Calu3 (cell line): ENCODE measurements at regions of chr9 and their contacts with region 1.

Region 1: GRCh38 chr9:112065806-112066606 is 109.1 kb downstream of the SUSD1 start:
- DNase-seq: peak; percentile 79
- H3K4me3 Mint-ChIP-seq: peak overlapping the region; percentile 45
- H3K27ac Mint-ChIP-seq: peak overlapping the region; percentile 97
- H3K4me1 Mint-ChIP-seq: peaks cover 52% of the 10 kb centered on the region
- H3K27me3 Mint-ChIP-seq: no peaks in the 10 kb centered on the region
- CTCF ChIP-seq: no peak

Region 2: DNA sequence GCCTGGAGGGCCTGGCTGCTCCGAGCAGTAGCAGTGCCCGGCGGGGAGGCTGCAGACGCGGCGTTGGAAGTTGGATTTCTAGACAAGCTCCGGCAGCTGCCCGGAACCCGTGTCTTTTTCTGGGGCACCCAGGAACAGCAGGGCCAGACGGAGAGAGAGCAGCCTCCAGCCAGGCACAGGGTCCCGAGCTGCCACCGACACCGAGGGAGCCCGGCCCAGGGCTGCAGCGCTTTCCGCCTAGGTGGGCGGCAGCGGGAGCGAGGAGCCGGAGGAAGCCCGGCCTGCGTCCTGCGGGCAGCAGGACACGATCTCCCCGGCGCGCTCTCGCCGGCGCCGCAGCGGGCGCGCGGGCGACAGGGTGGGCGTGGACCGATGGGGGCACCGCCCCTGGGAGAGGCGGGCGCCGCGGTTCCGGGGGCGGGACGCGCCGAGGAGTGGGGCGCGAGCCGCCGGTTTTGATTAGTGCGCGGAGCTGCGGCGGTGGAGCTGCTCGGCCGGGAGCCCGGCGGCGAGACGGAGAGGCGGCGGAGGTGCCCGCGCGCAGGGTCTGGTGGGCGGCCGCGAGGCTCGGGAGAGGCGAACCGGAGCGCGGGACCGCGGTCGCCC is 169.6 kb before region 1 on chr9 and contains the start of gene UGCG:
- CTCF ChIA-PET with region 1: no interaction called
- intact Hi-C with region 1: loop called (anchors 5 kb)
- DNase-seq: peak; percentile 90
- H3K4me3 Mint-ChIP-seq: no peak within 1 kb of the TSS
- H3K27ac Mint-ChIP-seq: peak within 1 kb of the TSS; percentile 96
- H3K4me1 Mint-ChIP-seq: no peaks in the 10 kb centered on the region
- H3K27me3 Mint-ChIP-seq: no peaks in the 10 kb centered on the region
- CTCF ChIP-seq: no peak
- total RNA-seq, gene UGCG: 75.5 and 84.8 TPM in 2 replicates

Region 3: DNA sequence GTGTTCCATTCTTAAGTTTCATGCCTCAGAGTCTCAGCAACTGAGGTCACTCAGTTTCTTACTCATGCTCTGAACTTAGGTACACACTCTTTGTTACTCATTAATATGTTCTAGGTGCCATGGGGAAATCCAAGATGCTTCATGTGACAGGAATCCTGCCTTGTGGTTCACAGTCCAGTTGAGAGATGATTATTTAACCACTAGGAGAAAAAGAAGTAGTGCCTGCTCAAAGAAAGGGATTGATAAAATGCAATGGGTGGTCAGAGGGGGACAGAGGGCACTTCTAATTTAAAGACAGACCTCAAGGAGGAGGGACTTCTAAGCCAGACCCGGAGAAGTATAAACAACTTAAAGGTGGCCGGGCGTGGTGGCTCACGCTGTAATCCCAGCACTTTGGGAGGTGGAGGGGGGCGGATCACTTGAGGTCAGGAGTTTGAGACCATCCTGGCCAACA is 100.4 kb before region 1 on chr9:
- CTCF ChIA-PET with region 1: interaction called, 5 read pairs
- intact Hi-C with region 1: loop called (anchors 2 kb)
- DNase-seq: peak; percentile 54
- H3K4me3 Mint-ChIP-seq: peak overlapping the region; percentile 31
- H3K27ac Mint-ChIP-seq: peak overlapping the region; percentile 95
- H3K4me1 Mint-ChIP-seq: peaks cover 44% of the 10 kb centered on the region
- H3K27me3 Mint-ChIP-seq: no peaks in the 10 kb centered on the region
- CTCF ChIP-seq: no peak

Region 4: DNA sequence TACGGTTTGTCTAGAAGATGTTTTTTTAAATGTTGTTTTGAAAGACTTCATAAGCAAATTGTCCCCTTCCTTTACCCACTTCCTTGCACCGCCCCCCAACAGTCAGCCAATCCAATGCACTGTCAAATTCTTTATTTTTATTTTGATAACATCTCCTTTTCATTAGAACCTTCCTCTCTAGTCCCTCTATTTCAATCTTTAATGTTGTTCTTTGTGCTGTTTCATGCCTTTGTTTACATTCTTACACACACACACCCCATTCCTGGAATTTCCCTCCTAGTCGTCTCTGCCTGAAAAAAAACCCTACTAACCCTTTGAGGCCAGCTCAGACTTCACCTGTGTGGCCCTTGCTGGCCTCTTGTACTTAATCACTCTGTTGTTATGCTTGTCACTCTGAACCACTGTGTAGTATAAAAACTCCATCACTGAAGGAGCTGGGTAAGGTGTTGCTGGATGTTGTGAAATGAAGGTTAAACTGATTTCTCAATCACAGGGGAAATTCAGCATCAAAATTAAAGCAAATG is 36.0 kb before region 1 on chr9:
- CTCF ChIA-PET with region 1: no interaction called
- intact Hi-C with region 1: loop called (anchors 5 kb)
- DNase-seq: peak; percentile 71
- H3K4me3 Mint-ChIP-seq: peak overlapping the region; percentile 12
- H3K27ac Mint-ChIP-seq: peak overlapping the region; percentile 86
- H3K4me1 Mint-ChIP-seq: peaks cover 55% of the 10 kb centered on the region
- H3K27me3 Mint-ChIP-seq: no peaks in the 10 kb centered on the region
- CTCF ChIP-seq: no peak

Region 5: DNA sequence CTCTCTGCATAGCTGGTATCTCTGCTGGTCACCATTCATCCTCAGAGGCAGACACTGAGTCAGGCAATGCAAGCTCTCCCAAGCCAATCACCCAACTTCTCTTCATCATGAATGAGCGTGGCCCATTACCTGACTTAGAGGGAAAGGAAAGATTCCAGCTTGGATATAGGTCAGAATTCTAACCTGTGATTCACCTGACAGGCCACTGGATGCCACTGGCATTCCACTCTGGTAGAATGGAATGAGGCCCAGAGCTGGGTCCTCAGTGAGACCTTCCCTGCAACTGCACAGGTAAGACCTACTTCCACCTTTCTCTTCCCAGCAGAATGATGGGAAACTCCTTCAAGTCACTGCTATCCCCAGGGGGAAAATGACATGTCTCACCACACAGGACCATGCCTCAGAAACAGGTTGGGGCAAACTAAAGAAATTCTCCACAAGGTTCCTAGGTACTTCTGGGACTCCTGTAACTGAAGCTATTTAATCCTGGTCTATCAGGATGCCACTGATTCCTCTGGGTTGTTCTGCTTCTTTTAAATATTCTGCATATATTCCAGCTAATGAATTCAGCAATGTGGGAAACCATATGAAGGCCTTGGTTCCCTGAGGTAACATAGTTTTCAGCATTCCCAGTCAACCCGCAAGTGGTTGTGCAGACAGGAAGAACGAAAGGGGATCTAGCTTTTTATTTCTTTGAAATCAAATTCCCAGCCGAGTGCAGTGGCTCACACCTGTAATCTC is 47.1 kb after region 1 on chr9:
- CTCF ChIA-PET with region 1: no interaction called
- intact Hi-C with region 1: no loop called
- DNase-seq: peak; percentile 43
- H3K4me3 Mint-ChIP-seq: peak overlapping the region; percentile 9
- H3K27ac Mint-ChIP-seq: peak overlapping the region; percentile 86
- H3K4me1 Mint-ChIP-seq: peaks cover 49% of the 10 kb centered on the region
- H3K27me3 Mint-ChIP-seq: no peaks in the 10 kb centered on the region
- CTCF ChIP-seq: no peak